ENCODE measurements at regions of chr13 and their contacts with region 1.

Region 1: DNA sequence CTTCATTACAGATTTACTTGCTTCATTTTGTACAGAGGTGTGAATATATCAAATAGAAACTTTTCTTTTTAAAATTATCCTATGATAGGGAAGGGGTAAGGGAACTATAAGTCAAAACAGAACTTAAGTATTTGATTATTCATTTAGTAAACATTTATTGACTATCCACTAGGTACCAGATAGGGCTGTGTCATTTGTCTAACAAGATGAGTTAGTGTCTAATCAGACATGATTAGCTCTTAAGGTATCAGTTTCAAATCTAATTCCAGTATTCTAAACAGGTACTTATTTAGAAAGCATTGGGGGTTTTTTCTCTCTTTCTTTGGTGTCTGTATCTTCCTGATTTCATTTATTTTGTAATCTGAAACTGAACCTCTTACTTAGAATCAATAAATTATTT is 32.2 kb downstream of the CDADC1 start:
- DNase-seq: no peak
- H3K4me3 ChIP-seq: no peak overlapping the region
- H3K27ac ChIP-seq: no peak overlapping the region
- H3K4me1 ChIP-seq: no peaks in the 10 kb centered on the region
- H3K27me3 ChIP-seq: no peaks in the 10 kb centered on the region
- CTCF ChIP-seq: no peak

Region 2: DNA sequence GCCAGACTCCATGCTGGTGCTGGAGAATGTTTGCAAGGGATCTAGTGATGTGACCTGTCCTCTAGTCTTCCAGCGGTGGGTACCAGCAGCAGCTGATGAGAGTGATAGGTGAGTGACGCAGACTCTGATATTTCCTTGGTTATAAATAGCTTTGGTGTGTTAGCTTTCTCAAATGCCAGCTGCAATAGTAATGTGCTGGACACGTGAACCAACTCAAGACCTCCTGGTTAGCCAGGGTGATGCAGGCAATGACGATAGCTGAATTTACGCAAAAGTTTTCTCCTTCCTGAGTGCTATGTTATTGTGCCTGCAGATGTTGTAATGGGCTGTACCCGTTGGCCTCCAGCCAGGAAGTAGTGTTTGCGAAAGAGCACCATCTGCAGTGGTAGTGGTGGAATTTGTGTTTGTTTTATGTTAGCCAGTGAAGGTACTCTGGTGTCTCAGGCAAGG is 496.7 kb before region 1 on chr13:
- intact Hi-C with region 1: no loop called
- DNase-seq: peak; percentile 67
- H3K4me3 ChIP-seq: no peak overlapping the region
- H3K27ac ChIP-seq: no peak overlapping the region
- H3K4me1 ChIP-seq: no peaks in the 10 kb centered on the region
- H3K27me3 ChIP-seq: no peaks in the 10 kb centered on the region
- CTCF ChIP-seq: no peak

Region 3: GRCh38 chr13:49052776-49053175 is 227.1 kb before region 1 on chr13:
- intact Hi-C with region 1: no loop called
- DNase-seq: no peak
- H3K4me3 ChIP-seq: no peak overlapping the region
- H3K27ac ChIP-seq: no peak overlapping the region
- H3K4me1 ChIP-seq: no peaks in the 10 kb centered on the region
- H3K27me3 ChIP-seq: no peaks in the 10 kb centered on the region
- CTCF ChIP-seq: no peak

Region 4: GRCh38 chr13:49098771-49099512 is 180.9 kb before region 1 on chr13:
- intact Hi-C with region 1: loop called (anchors 5 kb)
- DNase-seq: no peak
- H3K4me3 ChIP-seq: no peak overlapping the region
- H3K27ac ChIP-seq: peak overlapping the region; percentile 18
- H3K4me1 ChIP-seq: no peaks in the 10 kb centered on the region
- H3K27me3 ChIP-seq: no peaks in the 10 kb centered on the region
- CTCF ChIP-seq: peak; percentile 32

Region 5: GRCh38 chr13:49240017-49240416 is 39.9 kb before region 1 on chr13:
- intact Hi-C with region 1: loop called (anchors 5 kb)
- DNase-seq: no peak
- H3K4me3 ChIP-seq: no peak overlapping the region
- H3K27ac ChIP-seq: no peak overlapping the region
- H3K4me1 ChIP-seq: no peaks in the 10 kb centered on the region
- H3K27me3 ChIP-seq: no peaks in the 10 kb centered on the region
- CTCF ChIP-seq: peak; percentile 20

Region 6: DNA sequence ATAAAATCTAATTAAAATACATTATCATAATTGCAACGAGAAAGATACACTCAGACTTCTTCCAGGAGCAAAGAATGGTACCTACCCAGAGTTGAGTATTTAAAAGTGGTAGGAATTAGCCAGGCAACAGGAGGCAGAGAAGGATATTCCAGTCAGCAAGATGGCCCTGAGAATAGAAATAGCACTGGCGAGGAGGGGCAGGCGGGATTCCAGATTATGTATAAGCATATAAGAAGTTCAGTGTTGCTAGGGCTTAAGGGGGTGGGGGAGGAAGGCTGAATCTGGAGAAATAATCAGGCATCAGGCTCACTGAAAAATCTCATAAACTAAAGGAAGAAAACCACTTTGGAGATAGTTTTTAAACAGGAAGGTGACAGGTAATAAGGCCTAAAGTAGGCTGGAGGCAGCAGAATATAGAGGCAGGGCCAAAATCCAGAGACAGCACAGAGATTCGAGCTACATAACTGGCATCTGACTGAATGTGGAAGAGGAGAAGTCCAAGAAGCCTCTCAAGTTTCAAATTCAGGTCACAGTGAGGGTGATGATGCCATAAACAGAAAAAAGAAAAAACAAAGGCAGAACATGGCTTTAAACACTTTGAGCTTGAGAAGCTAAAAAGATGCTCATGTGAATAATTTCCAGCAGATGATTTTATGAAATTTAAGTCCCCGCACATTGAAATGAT is 505.1 kb after region 1 on chr13:
- intact Hi-C with region 1: no loop called
- DNase-seq: no peak
- H3K4me3 ChIP-seq: no peak overlapping the region
- H3K27ac ChIP-seq: no peak overlapping the region
- H3K4me1 ChIP-seq: no peaks in the 10 kb centered on the region
- H3K27me3 ChIP-seq: no peaks in the 10 kb centered on the region
- CTCF ChIP-seq: no peak